Activated T-helper 1 cell treated with anti-CD3 and anti-CD28 coated beads, Interleukin-12 subunit alpha, Interleukin-12 subunit beta, Interleukin-2, Interleukin-4 antibody, amounts not matched to agents 30 ng/mL and 10 ng/mL and 1 ng/mL, durations not matched to agents 14 hours and 24 hours and 36 hours (primary cell): ENCODE measurements at regions of chr20 and their contacts with region 1.

Region 1: GRCh38 chr20:62616728-62617621 is 25.3 kb upstream of the SLCO4A1 start:
- DNase-seq: peak; percentile 63
- H3K4me3 Mint-ChIP-seq: peak overlapping the region; percentile 81
- H3K27ac Mint-ChIP-seq: peak overlapping the region; percentile 96
- H3K4me1 Mint-ChIP-seq: peaks cover 28% of the 10 kb centered on the region
- H3K27me3 Mint-ChIP-seq: peaks cover 9% of the 10 kb centered on the region

Region 2: GRCh38 chr20:62407221-62407992 is 209.6 kb before region 1 on chr20 and contains the start of gene CABLES2:
- intact Hi-C with region 1: loop called (anchors 5 kb)
- DNase-seq: peak; percentile 90
- H3K4me3 Mint-ChIP-seq: peak within 1 kb of the TSS; percentile 85
- H3K27ac Mint-ChIP-seq: peak within 1 kb of the TSS; percentile 87
- H3K4me1 Mint-ChIP-seq: peaks cover 10% of the 10 kb centered on the region
- H3K27me3 Mint-ChIP-seq: no peaks in the 10 kb centered on the region
- total RNA-seq, gene CABLES2: 12.9 and 15.7 TPM in 2 replicates

Region 3: DNA sequence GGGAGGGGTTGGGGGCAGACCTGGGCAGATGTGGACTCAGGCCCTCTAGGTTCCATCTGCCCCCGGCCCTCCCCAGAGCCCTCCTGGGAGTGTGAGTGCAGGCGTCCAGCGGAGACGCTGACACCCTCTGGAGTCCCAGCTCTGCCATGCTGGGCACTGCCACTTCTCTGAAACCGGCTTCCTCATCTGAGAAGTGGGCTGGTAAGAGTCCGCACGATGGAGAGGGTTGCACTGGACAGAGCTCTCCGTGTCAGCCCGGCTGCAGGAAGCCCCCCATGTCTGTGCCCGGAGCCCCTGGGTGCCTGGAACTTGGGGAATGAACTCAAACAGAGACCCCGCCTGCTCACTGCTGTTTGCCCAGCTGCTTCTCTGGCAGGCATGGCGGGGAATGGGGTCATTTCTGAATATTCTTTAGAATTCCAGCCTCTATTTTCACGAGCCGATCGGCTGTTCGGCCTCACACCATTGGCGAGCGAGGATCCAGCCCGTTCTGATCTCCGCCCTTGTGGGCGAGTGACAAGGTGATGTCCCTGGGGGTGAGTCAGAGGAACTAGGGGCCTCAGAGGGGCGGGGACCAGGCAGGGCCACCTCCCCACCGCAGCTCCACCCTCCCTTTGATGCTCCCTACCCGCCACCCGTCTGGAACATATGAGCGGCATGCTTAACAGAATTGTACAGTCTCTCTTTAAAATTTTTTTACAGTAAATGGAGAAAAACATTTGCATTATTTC is 93.3 kb before region 1 on chr20:
- intact Hi-C with region 1: loop called (anchors 1 kb)
- DNase-seq: peak; percentile 44
- H3K4me3 Mint-ChIP-seq: peak overlapping the region; percentile 40
- H3K27ac Mint-ChIP-seq: peak overlapping the region; percentile 44
- H3K4me1 Mint-ChIP-seq: peaks cover 13% of the 10 kb centered on the region
- H3K27me3 Mint-ChIP-seq: peaks cover 7% of the 10 kb centered on the region

Region 4: GRCh38 chr20:62590301-62591121 is 26.5 kb before region 1 on chr20:
- intact Hi-C with region 1: no loop called
- DNase-seq: no peak
- H3K4me3 Mint-ChIP-seq: no peak overlapping the region
- H3K27ac Mint-ChIP-seq: no peak overlapping the region
- H3K4me1 Mint-ChIP-seq: no peaks in the 10 kb centered on the region
- H3K27me3 Mint-ChIP-seq: peaks cover 14% of the 10 kb centered on the region

Region 5: DNA sequence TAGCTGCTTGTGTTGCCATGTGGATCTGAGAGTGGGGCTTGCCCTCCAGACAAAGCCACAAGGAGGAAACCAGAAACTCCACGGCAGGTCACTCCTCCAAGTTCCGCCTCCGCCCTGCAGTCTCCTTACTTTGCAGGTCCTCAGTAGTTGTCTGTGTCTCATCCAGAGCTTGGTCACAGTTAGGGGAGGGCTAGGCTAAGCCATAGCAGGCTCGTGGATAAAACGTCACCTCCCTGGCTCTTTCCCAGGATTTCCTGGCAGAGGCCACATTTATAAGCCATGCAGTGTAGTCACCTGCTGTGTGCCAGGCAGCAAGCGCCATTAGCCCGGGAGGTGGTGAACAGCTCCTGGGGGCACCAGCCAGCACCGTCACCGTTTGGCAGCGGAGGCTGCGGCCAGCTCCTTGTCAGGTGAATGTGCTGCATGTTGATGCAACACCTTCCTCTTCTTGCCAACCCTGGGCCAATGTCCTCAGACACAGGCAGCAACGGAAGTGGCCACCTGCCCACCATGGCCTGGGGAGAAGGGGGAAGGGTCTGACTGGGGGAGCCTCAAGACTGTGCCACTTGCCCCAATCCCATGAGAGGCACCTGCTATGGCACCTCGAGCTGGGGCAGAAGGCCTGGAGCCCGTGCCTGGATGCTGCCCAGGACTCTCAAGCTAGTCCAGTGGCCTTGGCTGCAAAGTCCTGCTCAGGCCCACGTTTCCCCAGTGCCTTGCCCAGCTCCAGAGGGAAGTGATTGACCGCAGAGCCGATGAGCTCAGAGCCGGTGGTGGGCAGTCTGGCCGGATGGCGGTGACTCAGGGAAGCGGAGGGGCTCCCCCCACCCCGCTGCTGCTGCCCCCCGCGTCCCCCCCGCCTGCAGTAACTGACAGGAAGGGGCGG is 13.7 kb before region 1 on chr20:
- intact Hi-C with region 1: loop called (anchors 2 kb)
- DNase-seq: peak; percentile 25
- H3K4me3 Mint-ChIP-seq: peak overlapping the region; percentile 78
- H3K27ac Mint-ChIP-seq: peak overlapping the region; percentile 79
- H3K4me1 Mint-ChIP-seq: peaks cover 48% of the 10 kb centered on the region
- H3K27me3 Mint-ChIP-seq: peaks cover 21% of the 10 kb centered on the region

Region 6: GRCh38 chr20:62642040-62642665 is 25.2 kb after region 1 on chr20 and contains the start of gene SLCO4A1:
- intact Hi-C with region 1: no loop called
- DNase-seq: peak; percentile 90
- H3K4me3 Mint-ChIP-seq: peak within 1 kb of the TSS; percentile 85
- H3K27ac Mint-ChIP-seq: peak within 1 kb of the TSS; percentile 78
- H3K4me1 Mint-ChIP-seq: peaks cover 16% of the 10 kb centered on the region
- H3K27me3 Mint-ChIP-seq: peaks cover 16% of the 10 kb centered on the region
- total RNA-seq, gene SLCO4A1: 47.6 and 49.8 TPM in 2 replicates

Region 7: GRCh38 chr20:63461104-63461763 is 844.3 kb after region 1 on chr20:
- intact Hi-C with region 1: no loop called
- DNase-seq: no peak
- H3K4me3 Mint-ChIP-seq: no peak overlapping the region
- H3K27ac Mint-ChIP-seq: no peak overlapping the region
- H3K4me1 Mint-ChIP-seq: no peaks in the 10 kb centered on the region
- H3K27me3 Mint-ChIP-seq: peaks cover 6% of the 10 kb centered on the region